MCF 10A (cell line): ENCODE measurements at regions of chr13 and their contacts with region 1.

Region 1: DNA sequence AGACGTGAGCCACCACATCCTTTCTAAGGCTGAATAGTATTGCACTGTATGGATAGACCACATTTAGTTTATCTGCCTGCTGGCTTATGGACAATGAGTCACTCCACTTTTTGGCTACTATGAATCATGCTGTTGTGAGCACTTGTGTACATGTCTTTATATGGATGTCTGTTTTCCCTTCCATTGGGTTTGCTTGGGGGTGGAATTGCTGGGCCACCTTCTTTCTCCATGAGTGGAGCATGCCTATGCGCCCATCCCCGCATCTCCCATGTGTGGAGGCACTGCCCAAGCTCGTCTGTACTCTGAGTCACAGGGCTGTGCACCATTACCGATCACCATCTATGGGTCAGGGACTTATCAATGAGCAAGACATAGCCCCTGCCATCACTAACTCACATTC is 127.2 kb upstream of the GJB6 start:
- DNase-seq: peak; percentile 95
- H3K4me3 Mint-ChIP-seq: no peak overlapping the region
- H3K27ac Mint-ChIP-seq: peak overlapping the region; percentile 82
- H3K4me1 Mint-ChIP-seq: peaks cover 29% of the 10 kb centered on the region
- H3K27me3 Mint-ChIP-seq: no peaks in the 10 kb centered on the region
- CTCF ChIP-seq: no peak

Region 2: DNA sequence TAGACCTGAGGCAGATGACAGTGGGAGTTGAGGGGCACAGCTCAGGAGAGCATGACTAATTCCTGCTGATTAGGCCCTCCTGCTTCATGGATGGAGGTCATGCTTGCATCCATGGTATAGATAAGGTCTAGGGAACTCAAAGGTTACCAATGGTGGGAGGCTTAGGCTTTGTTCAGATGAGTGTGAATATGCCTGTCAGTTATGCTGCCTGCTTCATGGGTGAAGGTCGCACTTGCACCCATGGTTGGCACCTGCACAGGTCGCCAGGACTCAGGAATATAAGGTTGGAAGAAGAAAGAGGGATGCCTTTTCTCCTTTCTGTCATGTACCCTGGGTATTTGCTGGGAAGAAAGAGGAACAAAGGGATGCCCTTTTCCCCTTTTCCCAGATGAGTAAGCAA is 73.8 kb before region 1 on chr13:
- CTCF ChIA-PET with region 1: no interaction called
- POLR2A ChIA-PET with region 1: no interaction called
- intact Hi-C with region 1: no loop called
- DNase-seq: no peak
- H3K4me3 Mint-ChIP-seq: no peak overlapping the region
- H3K27ac Mint-ChIP-seq: no peak overlapping the region
- H3K4me1 Mint-ChIP-seq: no peaks in the 10 kb centered on the region
- H3K27me3 Mint-ChIP-seq: no peaks in the 10 kb centered on the region
- CTCF ChIP-seq: no peak

Region 3: GRCh38 chr13:20301403-20302071 is 57.8 kb before region 1 on chr13:
- CTCF ChIA-PET with region 1: no interaction called
- POLR2A ChIA-PET with region 1: no interaction called
- intact Hi-C with region 1: no loop called
- DNase-seq: no peak
- H3K4me3 Mint-ChIP-seq: no peak overlapping the region
- H3K27ac Mint-ChIP-seq: peak overlapping the region; percentile 39
- H3K4me1 Mint-ChIP-seq: peaks cover 13% of the 10 kb centered on the region
- H3K27me3 Mint-ChIP-seq: no peaks in the 10 kb centered on the region
- CTCF ChIP-seq: no peak

Region 4: DNA sequence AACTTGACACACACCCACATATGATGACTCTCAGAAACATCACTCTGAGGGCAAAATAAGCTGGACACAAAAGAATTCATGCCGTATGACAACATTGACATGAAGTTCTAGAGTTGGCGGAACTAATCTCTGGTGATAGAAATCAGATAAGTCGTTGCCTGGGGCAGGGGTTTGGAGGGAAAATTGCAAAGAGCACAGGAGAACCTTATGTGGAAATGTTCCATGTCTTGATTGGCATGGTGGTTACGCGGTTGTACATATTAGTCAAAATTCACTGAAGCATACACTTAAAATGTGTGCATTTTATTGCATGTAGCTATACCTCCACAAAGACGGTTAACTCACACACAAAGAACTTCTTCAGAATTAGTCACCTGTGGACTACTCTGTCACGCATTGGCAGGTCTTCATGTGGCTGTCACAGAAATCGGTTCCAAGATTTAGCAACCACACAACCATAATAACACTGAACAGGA is 10.6 kb after region 1 on chr13:
- CTCF ChIA-PET with region 1: interaction called, 4 read pairs
- POLR2A ChIA-PET with region 1: interaction called, 19 read pairs
- intact Hi-C with region 1: no loop called
- DNase-seq: peak; percentile 33
- H3K4me3 Mint-ChIP-seq: no peak overlapping the region
- H3K27ac Mint-ChIP-seq: peak overlapping the region; percentile 47
- H3K4me1 Mint-ChIP-seq: peaks cover 18% of the 10 kb centered on the region
- H3K27me3 Mint-ChIP-seq: no peaks in the 10 kb centered on the region
- CTCF ChIP-seq: no peak

Region 5: GRCh38 chr13:20418953-20419352 is 59.6 kb after region 1 on chr13:
- CTCF ChIA-PET with region 1: no interaction called
- POLR2A ChIA-PET with region 1: interaction called, 11 read pairs
- intact Hi-C with region 1: loop called (anchors 1 kb)
- DNase-seq: no peak
- H3K4me3 Mint-ChIP-seq: no peak overlapping the region
- H3K27ac Mint-ChIP-seq: peak overlapping the region; percentile 91
- H3K4me1 Mint-ChIP-seq: peaks cover 33% of the 10 kb centered on the region
- H3K27me3 Mint-ChIP-seq: no peaks in the 10 kb centered on the region
- CTCF ChIP-seq: no peak

Region 6: DNA sequence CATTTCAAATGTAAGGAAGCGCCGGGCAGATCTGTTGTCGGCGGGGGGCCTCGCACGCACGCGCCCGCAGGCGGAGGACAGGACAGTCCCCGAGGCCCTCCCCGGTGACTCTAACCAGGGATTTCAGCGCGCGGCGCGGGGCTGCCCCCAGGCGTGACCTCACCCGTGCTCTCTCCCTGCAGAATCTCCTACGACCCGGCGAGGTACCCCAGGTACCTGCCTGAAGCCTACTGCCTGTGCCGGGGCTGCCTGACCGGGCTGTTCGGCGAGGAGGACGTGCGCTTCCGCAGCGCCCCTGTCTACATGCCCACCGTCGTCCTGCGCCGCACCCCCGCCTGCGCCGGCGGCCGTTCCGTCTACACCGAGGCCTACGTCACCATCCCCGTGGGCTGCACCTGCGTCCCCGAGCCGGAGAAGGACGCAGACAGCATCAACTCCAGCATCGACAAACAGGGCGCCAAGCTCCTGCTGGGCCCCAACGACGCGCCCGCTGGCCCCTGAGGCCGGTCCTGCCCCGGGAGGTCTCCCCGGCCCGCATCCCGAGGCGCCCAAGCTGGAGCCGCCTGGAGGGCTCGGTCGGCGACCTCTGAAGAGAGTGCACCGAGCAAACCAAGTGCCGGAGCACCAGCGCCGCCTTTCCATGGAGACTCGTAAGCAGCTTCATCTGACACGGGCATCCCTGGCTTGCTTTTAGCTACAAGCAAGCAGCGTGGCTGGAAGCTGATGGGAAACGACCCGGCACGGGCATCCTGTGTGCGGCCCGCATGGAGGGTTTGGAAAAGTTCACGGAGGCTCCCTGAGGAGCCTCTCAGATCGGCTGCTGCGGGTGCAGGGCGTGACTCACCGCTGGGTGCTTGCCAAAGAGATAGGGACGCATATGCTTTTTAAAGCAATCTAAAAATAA is 362.4 kb after region 1 on chr13:
- CTCF ChIA-PET with region 1: no interaction called
- POLR2A ChIA-PET with region 1: no interaction called
- intact Hi-C with region 1: no loop called
- DNase-seq: peak; percentile 45
- H3K4me3 Mint-ChIP-seq: no peak overlapping the region
- H3K27ac Mint-ChIP-seq: no peak overlapping the region
- H3K4me1 Mint-ChIP-seq: no peaks in the 10 kb centered on the region
- H3K27me3 Mint-ChIP-seq: no peaks in the 10 kb centered on the region
- CTCF ChIP-seq: no peak

Region 7: DNA sequence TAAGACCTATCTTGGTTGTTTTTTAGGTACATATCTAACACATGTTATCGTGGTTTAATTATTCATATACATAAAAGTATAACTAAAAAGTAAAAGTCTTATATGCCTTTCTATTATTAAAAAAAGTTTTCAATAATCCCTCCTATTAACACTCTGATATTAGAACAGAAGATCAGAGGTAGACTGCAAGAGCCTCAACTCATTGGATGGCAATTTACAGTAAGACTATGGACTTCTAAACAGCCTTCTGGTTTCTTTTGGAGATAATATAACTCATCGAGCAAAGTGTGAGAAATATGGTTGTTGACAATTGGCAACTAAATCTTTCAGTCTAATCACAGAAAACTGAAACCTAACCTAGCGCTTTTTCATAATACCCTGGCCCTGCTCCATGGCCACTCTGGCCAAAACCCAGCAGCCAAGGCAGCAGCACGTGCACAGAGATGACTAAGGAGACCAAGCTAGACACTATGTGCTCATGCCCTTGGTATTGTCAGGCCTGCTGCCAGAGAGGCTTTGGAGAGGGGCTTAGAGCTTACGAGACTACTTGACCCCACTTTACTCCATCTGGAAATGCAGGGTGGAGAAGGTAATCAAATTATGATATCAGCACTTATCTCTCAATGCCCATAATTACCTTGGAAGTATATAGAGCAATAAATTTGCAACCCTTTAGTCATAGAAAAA is 455.0 kb after region 1 on chr13:
- CTCF ChIA-PET with region 1: no interaction called
- POLR2A ChIA-PET with region 1: no interaction called
- intact Hi-C with region 1: loop called (anchors 10 kb)
- DNase-seq: peak; percentile 96
- H3K4me3 Mint-ChIP-seq: peak overlapping the region; percentile 65
- H3K27ac Mint-ChIP-seq: peak overlapping the region; percentile 94
- H3K4me1 Mint-ChIP-seq: peaks cover 43% of the 10 kb centered on the region
- H3K27me3 Mint-ChIP-seq: no peaks in the 10 kb centered on the region
- CTCF ChIP-seq: no peak